ENCODE measurements at regions of chr17 and their contacts with region 1.

Region 1: DNA sequence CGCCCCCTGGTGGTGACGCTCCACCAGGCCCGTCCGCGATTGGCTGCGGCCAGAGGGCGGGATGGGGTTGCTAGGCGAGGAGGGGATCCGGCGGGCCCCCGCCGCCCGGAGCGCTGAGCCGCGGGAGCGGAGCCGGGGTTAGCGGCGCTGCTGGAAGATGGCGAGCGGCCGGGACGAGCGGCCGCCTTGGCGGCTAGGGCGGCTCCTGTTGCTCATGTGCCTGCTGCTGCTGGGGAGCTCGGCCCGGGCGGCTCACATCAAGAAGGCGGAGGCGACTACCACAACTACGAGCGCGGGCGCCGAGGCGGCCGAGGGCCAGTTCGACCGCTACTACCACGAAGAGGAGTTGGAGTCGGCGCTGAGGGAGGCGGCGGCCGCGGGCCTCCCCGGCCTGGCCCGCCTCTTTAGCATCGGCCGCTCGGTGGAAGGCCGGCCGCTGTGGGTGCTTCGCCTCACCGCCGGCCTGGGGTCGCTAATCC is at the start of gene CPD:
- DNase-seq: peak; percentile 95
- H3K4me3 Mint-ChIP-seq: peak within 1 kb of the TSS; percentile 85
- H3K27ac Mint-ChIP-seq: peak within 1 kb of the TSS; percentile 82
- H3K4me1 Mint-ChIP-seq: peaks cover 52% of the 10 kb centered on the region
- H3K27me3 Mint-ChIP-seq: peaks cover 3% of the 10 kb centered on the region
- total RNA-seq, gene CPD: 26.0 and 31.5 TPM in 2 replicates

Region 2: DNA sequence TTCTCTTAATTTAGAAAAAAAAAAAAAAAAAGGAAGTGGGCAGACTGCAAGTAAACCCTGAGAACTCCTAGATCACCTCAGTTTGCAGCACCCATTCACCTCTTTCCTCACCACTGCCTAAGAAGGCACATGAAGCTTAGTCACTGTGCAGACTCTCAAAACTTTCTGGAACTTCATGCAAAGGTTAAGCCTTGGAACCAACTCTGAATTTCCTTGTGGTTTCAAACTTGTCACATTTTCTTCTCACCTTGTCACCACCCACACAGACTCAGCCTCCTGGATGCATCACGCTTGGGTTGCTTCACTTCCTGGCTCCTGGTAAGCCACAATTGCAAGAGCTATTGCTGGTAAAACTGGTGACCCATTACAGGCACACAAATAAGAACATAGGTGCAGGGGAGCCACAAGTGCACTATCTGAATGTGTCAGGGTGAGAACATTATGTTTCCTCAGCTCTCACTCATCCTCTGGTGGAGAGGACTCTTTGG is 15.1 kb before region 1 on chr17:
- intact Hi-C with region 1: loop called (anchors 1 kb)
- DNase-seq: peak; percentile 65
- H3K4me3 Mint-ChIP-seq: no peak overlapping the region
- H3K27ac Mint-ChIP-seq: peak overlapping the region; percentile 58
- H3K4me1 Mint-ChIP-seq: peaks cover 26% of the 10 kb centered on the region
- H3K27me3 Mint-ChIP-seq: peaks cover 2% of the 10 kb centered on the region

Region 3: DNA sequence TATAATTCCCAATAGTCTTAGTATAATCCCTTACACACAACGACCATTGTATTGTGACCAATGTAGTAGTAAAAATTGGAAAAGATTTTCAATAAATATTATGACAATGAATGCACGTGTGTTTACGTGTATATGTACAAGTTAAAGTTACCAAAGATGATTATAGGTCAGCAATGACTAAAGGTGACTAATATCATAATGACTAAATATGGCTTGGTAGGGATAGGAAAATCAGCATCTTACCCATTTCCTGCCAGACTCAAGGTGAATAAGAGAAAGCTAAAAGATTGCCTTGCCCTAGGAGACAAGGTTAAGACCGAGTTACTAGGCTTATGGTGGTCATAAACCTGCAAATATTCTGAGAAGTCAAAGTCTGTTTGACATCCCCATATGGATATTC is 34.2 kb after region 1 on chr17:
- intact Hi-C with region 1: loop called (anchors 2 kb)
- DNase-seq: no peak
- H3K4me3 Mint-ChIP-seq: no peak overlapping the region
- H3K27ac Mint-ChIP-seq: peak overlapping the region; percentile 54
- H3K4me1 Mint-ChIP-seq: peaks cover 24% of the 10 kb centered on the region
- H3K27me3 Mint-ChIP-seq: no peaks in the 10 kb centered on the region

Measured in activated T-helper 2 cell treated with anti-CD3 and anti-CD28 coated beads, Interferon-gamma antibody, Interleukin-2, Interleukin-4, amounts not matched to agents 10 μg/mL and 5 μg/mL and 100 μg/mL, durations not matched to agents 14 hours and 24 hours and 36 hours (primary cell).